ENCODE measurements at regions of chr17 and their contacts with region 1.

Region 1: DNA sequence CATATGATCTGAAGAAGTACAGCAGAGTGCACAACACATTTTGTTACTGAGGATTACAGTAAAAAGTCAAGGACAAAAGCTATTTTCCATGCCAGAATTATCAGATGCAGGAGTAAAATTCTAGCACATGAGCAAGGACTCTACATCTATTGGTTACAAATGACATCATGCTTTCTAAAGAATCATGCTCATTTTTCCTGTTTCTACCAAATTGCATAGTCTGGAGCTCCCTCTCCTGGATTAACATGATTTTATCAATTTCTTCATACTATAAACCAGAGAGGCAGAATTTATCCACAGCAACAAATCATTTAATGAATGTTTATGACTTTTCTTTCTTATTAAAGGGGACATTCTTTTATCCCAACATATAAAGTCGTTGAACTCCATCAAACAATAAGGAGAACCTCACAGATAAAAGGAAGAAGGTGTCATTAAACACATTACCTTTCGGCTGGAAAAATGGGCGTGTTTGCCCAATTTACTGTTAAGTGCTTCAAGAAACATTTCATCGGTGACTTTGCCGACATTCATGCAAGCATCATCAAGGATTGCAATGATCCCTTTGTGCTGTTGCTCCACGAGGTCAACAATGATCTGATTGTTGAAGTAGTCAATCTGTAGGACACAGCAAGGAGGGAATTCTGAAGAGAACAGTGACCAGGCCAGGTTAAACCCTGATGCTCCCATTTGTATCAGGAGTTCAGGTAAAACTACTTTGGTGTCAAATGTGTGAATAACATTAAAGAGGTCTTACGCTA is 121.7 kb downstream of the MYO1D start:
- DNase-seq: peak in 2 of 4 donors; percentile 42 to 75
- ATAC-seq: peak; percentile 82
- H3K4me3 ChIP-seq: no peak overlapping the region
- H3K27ac ChIP-seq: no peak overlapping the region
- H3K4me1 ChIP-seq: no peaks in the 10 kb centered on the region
- H3K27me3 ChIP-seq: no peaks in the 10 kb centered on the region
- CTCF ChIP-seq: peak; percentile 21 to 29

Region 2: GRCh38 chr17:32486111-32486700 is 269.0 kb before region 1 on chr17:
- intact Hi-C with region 1: loop called in 1 of 2 experiments (anchors 10 kb)
- DNase-seq: peak in 2 of 4 donors; percentile 66 to 86
- ATAC-seq: peak; percentile 89
- H3K4me3 ChIP-seq: peak overlapping the region; percentile 26 to 49
- H3K27ac ChIP-seq: peak overlapping the region; percentile 57 to 66
- H3K4me1 ChIP-seq: peaks cover 7 to 20% of the 10 kb centered on the region in 2 donors
- H3K27me3 ChIP-seq: peaks cover 0 to 16% of the 10 kb centered on the region in 2 donors
- CTCF ChIP-seq: no peak

Region 3: DNA sequence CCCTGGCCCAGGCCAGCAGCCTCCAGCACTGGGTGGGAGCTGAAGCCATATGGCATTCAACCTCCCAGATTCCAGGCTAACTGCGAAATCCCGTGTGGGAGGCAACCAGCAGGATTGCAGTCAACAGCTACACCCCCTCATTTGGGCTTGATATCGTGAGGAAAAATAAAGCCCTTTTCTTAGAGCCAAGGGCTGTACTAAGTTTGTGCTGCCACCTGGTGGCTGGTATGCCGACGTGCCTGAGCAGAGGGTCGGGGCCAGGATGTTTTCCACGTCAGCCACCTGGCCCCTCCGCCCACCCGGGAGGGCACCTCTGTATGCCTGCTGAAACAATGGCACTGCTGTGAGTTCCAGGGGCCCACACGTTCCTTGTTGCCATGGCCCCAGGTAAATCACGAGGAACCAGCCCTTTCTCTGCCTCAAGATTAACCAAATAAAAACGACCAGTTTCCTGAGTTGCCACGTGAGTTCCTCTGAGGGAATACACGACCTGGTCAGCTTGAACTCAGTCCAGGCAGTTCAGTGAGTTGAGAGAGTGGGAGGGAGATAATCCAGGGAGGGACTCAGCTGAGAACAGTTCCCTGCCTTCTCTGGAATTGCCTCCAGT is 181.8 kb after region 1 on chr17:
- intact Hi-C with region 1: no loop called
- DNase-seq: peak; percentile 60 to 88 (median 75)
- ATAC-seq: peak; percentile 85
- H3K4me3 ChIP-seq: no peak overlapping the region
- H3K27ac ChIP-seq: no peak overlapping the region
- H3K4me1 ChIP-seq: peaks cover 4 to 12% of the 10 kb centered on the region in 2 donors
- H3K27me3 ChIP-seq: no peaks in the 10 kb centered on the region
- CTCF ChIP-seq: peak; percentile 71 to 85